Cardiac septum (tissue), 1 donor: ENCODE measurements at regions of chr2 and their contacts with region 1.

Region 1: DNA sequence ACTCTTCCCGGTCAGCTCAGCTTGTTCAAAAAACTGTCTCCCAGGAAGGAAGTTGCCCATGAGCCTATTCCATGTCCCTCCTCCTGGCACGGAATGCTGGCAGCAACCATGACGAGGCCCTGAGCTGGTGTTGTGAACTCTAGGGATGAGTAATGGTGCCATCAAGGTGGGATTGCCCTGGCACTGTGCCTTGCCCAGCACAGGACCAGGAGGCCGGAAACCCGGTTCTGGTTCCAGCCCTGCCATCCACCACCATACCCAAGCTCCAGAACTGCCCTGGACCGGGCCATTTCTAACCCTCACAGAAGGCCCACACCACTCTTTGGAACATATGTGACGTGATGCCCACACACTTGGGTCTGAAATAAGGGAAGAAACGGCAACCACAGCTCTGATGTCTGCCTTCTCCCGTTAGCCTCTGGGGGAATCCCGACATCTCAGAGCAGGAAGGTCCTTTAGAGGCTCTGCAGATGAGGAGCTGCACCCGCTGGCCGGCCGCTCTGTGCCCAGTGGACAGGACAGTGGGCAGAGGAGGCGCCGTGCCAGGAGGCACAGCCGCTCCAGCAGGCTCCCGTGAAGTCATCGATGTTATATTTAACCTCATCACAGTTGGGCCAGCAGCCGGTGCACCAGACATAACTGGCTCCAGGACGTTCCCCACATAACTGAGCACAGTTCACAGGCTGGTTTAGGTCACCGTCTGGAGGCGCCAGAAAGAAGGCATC is 462.1 kb upstream of the ID2 start:
- DNase-seq: peak; percentile 85

Region 2: DNA sequence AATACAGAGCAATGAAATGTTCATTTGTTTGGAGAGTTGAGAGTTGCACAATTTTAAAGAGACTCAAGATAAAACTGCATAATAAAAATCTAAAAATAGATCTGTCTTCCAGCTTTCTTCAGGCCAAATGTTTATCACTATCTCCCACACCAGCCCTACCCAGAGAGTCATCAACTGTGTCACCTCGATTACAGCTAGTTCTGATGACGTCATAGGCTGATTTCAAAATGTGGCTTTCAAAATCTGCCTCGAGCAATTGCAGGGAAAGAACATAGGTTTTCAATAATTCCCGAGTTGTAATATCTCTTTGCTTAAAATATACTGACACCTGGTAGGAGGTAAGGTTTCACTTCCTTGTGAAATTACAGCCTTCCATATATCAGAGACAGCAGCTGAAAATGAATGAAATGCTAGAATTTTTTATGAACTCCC is 215.5 kb before region 1 on chr2:
- intact Hi-C with region 1: loop called (anchors 5 kb)
- DNase-seq: no peak

Region 3: GRCh38 chr2:8134985-8135682 is 84.7 kb before region 1 on chr2:
- intact Hi-C with region 1: loop called (anchors 5 kb)
- DNase-seq: no peak

Region 4: GRCh38 chr2:8427211-8427610 is 207.4 kb after region 1 on chr2:
- intact Hi-C with region 1: no loop called
- DNase-seq: no peak

Region 5: DNA sequence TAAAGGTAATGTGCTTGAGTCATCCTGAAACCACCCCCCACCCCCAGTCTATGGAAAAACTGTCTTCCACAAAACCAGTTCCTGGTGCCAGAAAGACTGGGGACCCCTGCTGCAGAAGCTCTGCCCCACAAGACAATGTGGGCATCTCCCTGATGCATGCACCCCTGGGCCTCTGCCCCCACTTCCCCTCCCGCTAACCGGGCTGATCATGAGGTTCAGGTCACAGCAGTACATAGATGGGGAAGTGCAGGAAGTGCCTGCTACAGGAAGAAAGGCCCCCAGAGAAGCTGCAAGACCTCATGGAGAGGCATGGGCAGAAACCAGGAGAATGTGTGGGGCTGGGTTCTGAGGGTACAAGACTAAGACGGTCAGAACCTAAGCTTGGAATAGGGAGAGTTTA is 218.7 kb after region 1 on chr2:
- intact Hi-C with region 1: loop called (anchors 1 kb)
- DNase-seq: no peak